Activated T-helper 2 cell treated with anti-CD3 and anti-CD28 coated beads, Interferon-gamma antibody, Interleukin-2, Interleukin-4, amounts not matched to agents 10 μg/mL and 5 μg/mL and 100 μg/mL, durations not matched to agents 14 hours and 24 hours and 36 hours (primary cell): ENCODE measurements at regions of chr1 and their contacts with region 1.

Region 1: GRCh38 chr1:33472349-33472980 is at the start of gene ZSCAN20:
- DNase-seq: peak; percentile 82
- H3K4me3 Mint-ChIP-seq: peak within 1 kb of the TSS; percentile 81
- H3K27ac Mint-ChIP-seq: peak within 1 kb of the TSS; percentile 43
- H3K4me1 Mint-ChIP-seq: peaks cover 30% of the 10 kb centered on the region
- H3K27me3 Mint-ChIP-seq: no peaks in the 10 kb centered on the region
- total RNA-seq, gene ZSCAN20: 2.6 and 4.1 TPM in 2 replicates

Region 2: GRCh38 chr1:33295450-33296081 is 176.9 kb before region 1 on chr1:
- intact Hi-C with region 1: loop called (anchors 5 kb)
- DNase-seq: peak; percentile 75
- H3K4me3 Mint-ChIP-seq: no peak overlapping the region
- H3K27ac Mint-ChIP-seq: no peak overlapping the region
- H3K4me1 Mint-ChIP-seq: peaks cover 7% of the 10 kb centered on the region
- H3K27me3 Mint-ChIP-seq: no peaks in the 10 kb centered on the region